Activated CD4-positive, alpha-beta T cell treated with anti-CD3 and anti-CD28 coated beads, Interleukin-2, amount 10 ng/mL, durations not matched to agents 24 days and 14 days (primary cell): ENCODE measurements at regions of chr19 and their contacts with region 1.

Region 1: GRCh38 chr19:39970675-39971379 is at the start of gene PSMC4:
- DNase-seq: peak; percentile 100
- H3K4me3 Mint-ChIP-seq: peak within 1 kb of the TSS; percentile 95
- H3K27ac Mint-ChIP-seq: peak within 1 kb of the TSS; percentile 98
- H3K4me1 Mint-ChIP-seq: peaks cover 57% of the 10 kb centered on the region
- H3K27me3 Mint-ChIP-seq: no peaks in the 10 kb centered on the region
- total RNA-seq, gene PSMC4: 192 and 193 TPM in 2 replicates

Region 2: DNA sequence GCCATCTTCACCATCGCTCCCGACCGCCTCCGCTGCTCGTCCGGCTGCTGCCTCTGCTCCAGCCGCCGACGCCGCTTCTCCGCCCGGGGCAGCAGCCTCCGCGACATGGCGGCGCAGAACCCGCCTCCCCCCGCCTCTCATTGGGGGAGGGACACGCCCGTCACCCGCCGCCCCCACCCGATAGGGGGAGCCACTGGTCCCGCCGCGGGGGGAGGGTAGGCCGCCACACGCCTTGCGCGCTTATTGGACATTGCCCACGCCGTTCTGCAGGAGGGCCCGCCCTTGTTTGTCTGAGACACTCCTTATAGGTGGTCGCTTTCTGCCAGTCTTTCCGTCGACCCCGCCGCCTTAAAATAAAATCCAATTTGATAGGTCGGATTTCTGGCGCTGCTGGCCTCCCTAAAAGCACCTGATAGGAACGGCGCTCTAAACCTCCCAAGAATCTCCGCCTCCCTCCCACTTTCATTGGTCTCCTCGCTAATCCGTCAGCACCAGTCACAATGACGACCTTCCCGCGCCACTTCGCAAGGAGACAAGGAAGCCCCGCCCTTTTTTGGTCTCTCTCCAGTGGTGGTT is 1120.9 kb before region 1 on chr19 and contains the start of gene HNRNPL:
- intact Hi-C with region 1: loop called (anchors 2 kb)
- DNase-seq: peak; percentile 100
- H3K4me3 Mint-ChIP-seq: peak within 1 kb of the TSS; percentile 98
- H3K27ac Mint-ChIP-seq: peak within 1 kb of the TSS; percentile 100
- H3K4me1 Mint-ChIP-seq: peaks cover 39% of the 10 kb centered on the region
- H3K27me3 Mint-ChIP-seq: no peaks in the 10 kb centered on the region
- total RNA-seq, gene HNRNPL: 686 and 695 TPM in 2 replicates

Region 3: DNA sequence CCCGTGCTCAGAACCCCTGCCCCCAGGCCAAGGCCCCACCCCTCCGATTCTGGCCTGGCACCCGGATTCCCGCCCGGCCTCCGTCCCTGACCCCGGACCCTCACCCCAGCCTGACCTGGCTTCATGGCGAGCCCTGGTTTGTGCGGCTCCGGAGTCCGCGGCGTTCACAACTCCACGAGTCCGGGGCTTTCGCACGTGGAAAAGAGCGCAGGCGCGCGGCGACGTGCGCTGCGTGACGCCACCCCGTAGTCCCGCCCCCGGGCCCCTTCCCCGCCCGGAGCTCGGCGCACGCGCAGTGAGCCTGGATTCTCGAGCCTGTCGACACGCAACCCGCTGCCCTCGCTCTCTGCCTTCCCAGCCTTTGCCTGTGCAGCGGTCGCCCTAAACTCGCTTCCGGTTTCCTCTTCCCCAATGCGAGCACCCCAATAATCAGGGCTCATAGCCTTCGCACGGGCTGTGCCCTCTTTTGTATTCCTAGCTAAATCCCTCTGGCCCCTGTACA is 124.6 kb before region 1 on chr19 and contains the start of gene FBL:
- intact Hi-C with region 1: loop called (anchors 2 kb)
- DNase-seq: peak; percentile 100
- H3K4me3 Mint-ChIP-seq: peak within 1 kb of the TSS; percentile 93
- H3K27ac Mint-ChIP-seq: peak within 1 kb of the TSS; percentile 92
- H3K4me1 Mint-ChIP-seq: peaks cover 42% of the 10 kb centered on the region
- H3K27me3 Mint-ChIP-seq: no peaks in the 10 kb centered on the region
- total RNA-seq, gene FBL: 605 and 614 TPM in 2 replicates

Region 4: GRCh38 chr19:39937094-39937720 is 33.6 kb before region 1 on chr19:
- intact Hi-C with region 1: loop called (anchors 1 kb)
- DNase-seq: peak; percentile 85
- H3K4me3 Mint-ChIP-seq: peak overlapping the region; percentile 47
- H3K27ac Mint-ChIP-seq: peak overlapping the region; percentile 72
- H3K4me1 Mint-ChIP-seq: peaks cover 57% of the 10 kb centered on the region
- H3K27me3 Mint-ChIP-seq: peaks cover 2% of the 10 kb centered on the region

Region 5: DNA sequence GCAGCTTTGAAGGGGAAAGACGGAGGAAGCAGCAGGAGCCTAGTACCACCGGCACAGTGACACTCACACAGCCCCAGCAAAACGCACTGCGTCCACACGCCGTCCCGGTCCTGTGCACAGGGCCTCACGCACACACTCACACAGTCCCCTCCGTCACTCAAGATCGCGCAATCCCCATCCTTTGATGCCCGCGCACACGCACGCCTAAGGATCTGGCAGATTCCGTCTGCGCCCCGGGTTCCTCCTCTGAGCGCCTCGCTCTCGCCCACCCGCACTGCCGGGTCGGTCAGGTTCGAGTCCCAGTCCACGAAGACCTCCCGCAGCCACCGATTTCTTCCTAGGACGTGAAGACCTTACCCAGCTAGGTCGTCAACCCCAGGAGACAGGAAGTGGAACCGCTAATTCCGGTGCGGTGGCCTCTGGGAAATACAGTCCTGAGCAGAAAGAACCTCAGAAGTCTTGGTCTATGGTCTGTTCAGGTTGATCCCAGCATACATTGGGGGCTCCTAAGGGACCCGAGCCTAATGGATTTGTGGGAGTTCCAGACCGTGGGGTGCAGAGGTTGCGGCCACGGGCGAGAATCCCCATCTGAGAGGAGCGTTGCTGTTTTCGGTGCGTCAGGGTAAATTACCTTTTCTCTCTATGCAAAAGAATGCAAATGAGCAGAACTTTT is 85.1 kb after region 1 on chr19 and contains the start of gene ZNF780B:
- intact Hi-C with region 1: loop called (anchors 2 kb)
- DNase-seq: peak; percentile 92
- H3K4me3 Mint-ChIP-seq: peak within 1 kb of the TSS; percentile 100
- H3K27ac Mint-ChIP-seq: peak within 1 kb of the TSS; percentile 98
- H3K4me1 Mint-ChIP-seq: peaks cover 35% of the 10 kb centered on the region
- H3K27me3 Mint-ChIP-seq: peaks cover 6% of the 10 kb centered on the region
- total RNA-seq, gene ZNF780B: 19.5 and 24.6 TPM in 2 replicates

Region 6: DNA sequence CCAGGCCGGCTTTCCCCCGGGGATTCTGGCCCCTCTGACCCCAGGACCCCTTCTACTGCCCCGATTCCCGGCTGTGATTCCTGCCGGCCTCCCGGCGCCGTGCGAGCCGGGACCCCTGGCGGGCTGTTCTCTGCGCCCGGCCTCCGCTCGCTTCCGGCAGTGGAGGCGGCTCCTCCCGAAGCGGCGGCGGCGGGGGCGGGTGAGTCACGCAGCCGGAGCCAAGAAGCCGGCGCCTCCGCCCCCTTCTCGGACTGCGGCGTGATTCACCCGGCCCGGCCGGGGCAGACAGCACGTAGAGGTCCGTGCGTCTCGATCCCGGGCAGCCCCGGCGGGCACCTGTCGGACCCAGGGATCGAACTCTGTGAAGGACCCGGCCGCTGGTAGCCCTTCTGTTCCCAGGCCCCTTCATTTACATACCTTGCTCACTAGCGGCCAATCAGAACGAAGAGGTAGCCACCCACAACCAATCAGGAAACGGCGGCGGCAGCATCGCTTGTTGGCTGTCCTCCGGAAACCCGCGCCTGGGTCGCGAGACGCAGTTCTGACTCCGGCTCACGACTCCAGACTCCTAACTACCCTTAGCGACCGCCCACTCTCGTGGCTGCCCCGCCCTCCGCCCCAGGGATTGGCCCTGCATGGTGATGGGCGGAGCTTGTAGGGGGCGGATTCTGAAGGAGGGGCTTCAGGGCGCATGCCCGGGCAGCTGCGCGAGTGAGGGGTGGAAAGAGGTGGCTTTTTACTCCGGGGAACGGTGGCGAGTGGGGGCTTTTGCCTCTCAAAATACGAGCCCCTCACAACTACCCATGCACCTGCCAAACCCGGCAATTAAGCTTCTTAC is 454.8 kb after region 1 on chr19 and contains the start of gene SERTAD1:
- intact Hi-C with region 1: loop called (anchors 2 kb)
- DNase-seq: peak; percentile 100
- H3K4me3 Mint-ChIP-seq: peak within 1 kb of the TSS; percentile 92
- H3K27ac Mint-ChIP-seq: peak within 1 kb of the TSS; percentile 91
- H3K4me1 Mint-ChIP-seq: peaks cover 26% of the 10 kb centered on the region
- H3K27me3 Mint-ChIP-seq: peaks cover 5% of the 10 kb centered on the region
- total RNA-seq, gene SERTAD1: 19.3 and 20.8 TPM in 2 replicates